GM18951 (cell line): ENCODE measurements at regions of chr12 and their contacts with region 1.

Region 1: DNA sequence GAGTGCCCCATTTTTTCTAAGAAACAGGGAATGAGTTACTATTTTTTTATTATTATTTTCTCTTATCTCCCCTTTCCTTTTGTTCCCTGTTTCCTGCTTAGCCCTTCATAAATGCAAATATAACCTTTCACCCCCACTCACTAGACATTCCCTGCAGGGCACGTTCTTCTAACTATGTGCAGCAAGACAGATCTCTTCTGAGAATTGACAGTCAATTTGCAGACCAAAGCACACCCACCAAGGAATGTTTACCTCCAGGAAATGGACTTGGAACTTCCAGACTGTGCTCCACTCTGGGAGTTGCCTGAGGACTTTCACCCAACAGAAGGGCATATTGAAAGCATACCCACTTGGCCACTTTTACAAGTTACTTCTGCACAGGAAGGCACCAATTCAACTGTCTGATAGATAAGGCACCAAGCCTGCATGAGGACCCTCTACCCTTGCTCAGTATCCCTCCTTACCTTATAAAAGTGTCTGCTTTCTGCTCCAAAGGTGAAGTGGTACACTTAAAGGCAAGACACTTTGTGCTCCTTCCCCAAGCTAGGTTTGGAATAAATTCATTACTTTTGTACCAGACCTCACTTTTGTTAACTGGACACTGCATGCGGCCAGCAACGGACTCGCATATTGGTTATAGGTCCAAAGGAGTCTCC is 6.5 kb downstream of the TAS2R19 start:
- POLR2A ChIP-seq: no peak

Region 2: DNA sequence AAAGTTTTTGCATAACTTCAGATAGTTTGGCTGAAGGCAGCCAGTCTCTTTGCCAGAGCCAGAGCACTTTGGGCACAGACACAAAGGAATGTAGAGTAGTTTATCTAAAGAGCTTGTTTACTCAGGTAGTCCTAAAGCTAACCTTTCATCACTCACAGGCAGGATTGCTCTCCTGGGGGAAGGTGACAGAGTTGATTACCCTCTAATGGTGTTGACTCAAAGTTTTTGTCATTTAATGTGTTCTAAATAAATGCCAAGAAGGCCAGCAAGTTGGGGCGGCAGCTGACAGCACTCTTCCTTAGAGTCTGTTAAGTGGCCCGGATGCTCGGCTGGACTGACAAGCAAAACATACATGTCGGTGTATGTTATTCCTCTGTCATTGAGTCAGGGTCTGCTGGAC is 55.5 kb after region 1 on chr12:
- in situ Hi-C with region 1: loop called (anchors 5 kb)
- POLR2A ChIP-seq: no peak